CD8-positive, alpha-beta memory T cell (primary cell): ENCODE measurements at regions of chr16 and their contacts with region 1.

Region 1: DNA sequence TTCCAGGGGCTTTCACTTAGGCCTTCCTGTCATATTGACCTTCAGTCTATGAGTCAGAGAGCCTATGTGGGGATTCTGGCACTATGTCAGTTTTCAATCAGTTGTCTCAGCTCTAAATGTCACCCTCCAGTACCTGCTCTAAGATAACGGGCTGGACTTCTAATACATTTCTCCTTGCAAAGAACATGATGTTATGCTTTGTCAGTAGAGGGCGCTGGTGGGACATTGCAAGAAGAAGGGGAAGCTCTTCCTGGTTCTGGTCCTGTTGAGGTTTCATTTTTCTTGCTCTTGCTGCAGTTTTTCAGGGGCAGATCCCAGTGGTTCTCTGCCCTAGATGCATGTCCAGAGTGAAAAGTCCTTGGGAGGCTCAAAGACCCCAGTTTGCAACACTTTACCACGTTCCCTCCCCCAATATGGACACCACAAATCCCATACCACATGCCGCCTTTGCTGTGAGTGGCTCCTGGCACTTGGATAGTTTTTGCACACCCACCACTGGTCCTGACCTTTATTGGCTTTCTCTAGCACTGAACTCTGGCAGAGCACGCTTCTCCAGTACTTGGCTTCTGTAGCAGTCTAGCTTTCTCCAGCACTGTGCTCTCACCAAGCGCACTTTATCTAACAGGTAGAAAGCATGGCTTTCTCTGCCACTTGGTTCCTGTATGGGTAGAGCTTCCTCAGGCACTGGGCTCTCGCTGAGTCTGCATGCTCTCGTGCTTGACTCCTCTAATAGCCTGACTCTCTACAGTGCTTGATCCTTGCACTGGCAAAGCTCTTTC is 49.0 kb downstream of the BCL7C start:
- DNase-seq: peak; percentile 69 to 86 (median 79)
- H3K4me3 ChIP-seq: peak overlapping the region; percentile 17
- H3K4me3 Mint-ChIP-seq: peak overlapping the region in 6 of 7 donors; percentile 60 to 71 (median 68)
- H3K27ac ChIP-seq: no peak overlapping the region
- H3K27ac Mint-ChIP-seq: peak overlapping the region in 6 of 8 donors; percentile 10 to 86 (median 37)
- H3K4me1 ChIP-seq: peaks cover 7% of the 10 kb centered on the region
- H3K4me1 Mint-ChIP-seq: peaks cover 8 to 10% (median 10%) of the 10 kb centered on the region in 3 donors
- H3K27me3 ChIP-seq: no peaks in the 10 kb centered on the region
- H3K27me3 Mint-ChIP-seq: peaks cover 0 to 2% of the 10 kb centered on the region in 2 donors

Region 2: DNA sequence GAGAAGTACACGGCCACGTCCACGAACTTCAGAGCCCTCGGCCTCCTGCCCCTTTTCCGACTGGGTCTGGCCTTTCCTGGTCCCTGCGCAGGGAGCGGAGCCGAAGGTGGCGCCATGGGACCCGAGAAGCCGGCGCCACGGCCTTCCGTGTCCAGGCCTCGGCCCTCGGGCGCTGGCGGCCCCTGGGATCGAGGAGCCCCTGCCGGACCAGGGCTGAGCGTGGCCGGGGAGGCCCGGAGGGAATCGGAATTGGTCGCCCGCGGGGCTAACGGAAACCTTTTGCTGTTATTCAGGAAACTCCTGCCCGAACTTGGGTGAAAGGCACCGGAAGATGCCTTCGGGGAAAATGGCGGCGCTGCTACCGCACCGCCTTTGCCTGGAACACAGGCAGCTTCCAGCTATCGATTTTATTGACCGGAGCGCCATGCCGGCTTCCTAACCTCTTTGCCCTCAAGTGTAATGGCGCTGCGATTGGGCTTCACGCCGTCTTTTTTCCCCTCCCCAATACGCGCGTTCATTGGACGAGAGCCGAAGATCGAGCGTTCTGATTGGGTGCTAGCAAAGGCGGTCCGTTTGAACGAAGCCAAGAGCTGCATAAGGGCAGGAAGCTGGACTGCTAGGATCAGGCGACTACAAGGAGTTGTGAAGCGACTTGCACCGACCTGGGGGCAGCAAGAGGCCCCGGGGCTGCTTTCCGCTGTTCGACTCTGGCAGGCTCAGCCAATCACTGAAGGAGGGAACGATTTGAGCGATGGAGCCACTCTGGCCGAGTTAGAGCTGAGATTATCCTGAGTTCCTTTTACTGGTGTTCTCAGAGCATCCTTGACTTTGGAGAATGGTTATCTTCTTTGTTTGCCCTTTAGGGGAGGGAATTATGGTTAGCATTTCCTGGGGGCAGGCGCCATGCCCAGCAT is 234.7 kb before region 1 on chr16 and contains the start of gene ZNF689:
- CTCF ChIA-PET with region 1: no interaction called
- POLR2A ChIA-PET with region 1: no interaction called
- DNase-seq: peak; percentile 86 to 96 (median 93)
- H3K4me3 ChIP-seq: peak within 1 kb of the TSS; percentile 97
- H3K4me3 Mint-ChIP-seq: peak within 1 kb of the TSS; percentile 83 to 98 (median 94)
- H3K27ac ChIP-seq: peak within 1 kb of the TSS; percentile 97
- H3K27ac Mint-ChIP-seq: peak within 1 kb of the TSS; percentile 83 to 100 (median 96)
- H3K4me1 ChIP-seq: peaks cover 12% of the 10 kb centered on the region
- H3K4me1 Mint-ChIP-seq: peaks cover 13 to 26% (median 22%) of the 10 kb centered on the region in 3 donors
- H3K27me3 ChIP-seq: no peaks in the 10 kb centered on the region
- H3K27me3 Mint-ChIP-seq: peaks cover 0 to 3% of the 10 kb centered on the region in 2 donors
- total RNA-seq, gene ZNF689: 14.6 to 15.7 TPM

Region 3: GRCh38 chr16:30834130-30834740 is 10.6 kb before region 1 on chr16:
- CTCF ChIA-PET with region 1: interaction called, 11 read pairs
- POLR2A ChIA-PET with region 1: interaction called, 4 read pairs
- DNase-seq: no peak
- H3K4me3 ChIP-seq: no peak overlapping the region
- H3K4me3 Mint-ChIP-seq: no peak overlapping the region
- H3K27ac ChIP-seq: no peak overlapping the region
- H3K27ac Mint-ChIP-seq: no peak overlapping the region
- H3K4me1 ChIP-seq: no peaks in the 10 kb centered on the region
- H3K4me1 Mint-ChIP-seq: no peaks in the 10 kb centered on the region
- H3K27me3 ChIP-seq: no peaks in the 10 kb centered on the region
- H3K27me3 Mint-ChIP-seq: peaks cover 0 to under 1% of the 10 kb centered on the region in 2 donors

Region 4: GRCh38 chr16:30922420-30922959 is 77.6 kb after region 1 on chr16:
- CTCF ChIA-PET with region 1: interaction called, 60 read pairs
- POLR2A ChIA-PET with region 1: no interaction called
- DNase-seq: peak; percentile 99 to 100 (median 100)
- H3K4me3 ChIP-seq: peak overlapping the region; percentile 95
- H3K4me3 Mint-ChIP-seq: peak overlapping the region; percentile 93 to 99 (median 96)
- H3K27ac ChIP-seq: peak overlapping the region; percentile 84
- H3K27ac Mint-ChIP-seq: peak overlapping the region; percentile 95 to 100 (median 98)
- H3K4me1 ChIP-seq: no peaks in the 10 kb centered on the region
- H3K4me1 Mint-ChIP-seq: peaks cover 15 to 33% (median 16%) of the 10 kb centered on the region in 3 donors
- H3K27me3 ChIP-seq: no peaks in the 10 kb centered on the region
- H3K27me3 Mint-ChIP-seq: no peaks in the 10 kb centered on the region

Region 5: GRCh38 chr16:30941600-30942425 is 97.0 kb after region 1 on chr16:
- CTCF ChIA-PET with region 1: interaction called, 43 read pairs
- POLR2A ChIA-PET with region 1: no interaction called
- DNase-seq: peak; percentile 53 to 74 (median 55)
- H3K4me3 ChIP-seq: no peak overlapping the region
- H3K4me3 Mint-ChIP-seq: peak overlapping the region in 4 of 7 donors; percentile 34 to 84 (median 51)
- H3K27ac ChIP-seq: no peak overlapping the region
- H3K27ac Mint-ChIP-seq: peak overlapping the region in 4 of 8 donors; percentile 50 to 84 (median 59)
- H3K4me1 ChIP-seq: peaks cover 7% of the 10 kb centered on the region
- H3K4me1 Mint-ChIP-seq: peaks cover 10 to 24% (median 14%) of the 10 kb centered on the region in 3 donors
- H3K27me3 ChIP-seq: no peaks in the 10 kb centered on the region
- H3K27me3 Mint-ChIP-seq: no peaks in the 10 kb centered on the region

Region 6: GRCh38 chr16:31094424-31095120 is 249.7 kb after region 1 on chr16 and contains the start of gene VKORC1:
- CTCF ChIA-PET with region 1: no interaction called
- POLR2A ChIA-PET with region 1: no interaction called
- DNase-seq: peak; percentile 74 to 89 (median 82)
- H3K4me3 ChIP-seq: peak within 1 kb of the TSS; percentile 98
- H3K4me3 Mint-ChIP-seq: peak within 1 kb of the TSS; percentile 73 to 97 (median 90)
- H3K27ac ChIP-seq: peak within 1 kb of the TSS; percentile 75
- H3K27ac Mint-ChIP-seq: peak within 1 kb of the TSS; percentile 68 to 97 (median 90)
- H3K4me1 ChIP-seq: peaks cover 16% of the 10 kb centered on the region
- H3K4me1 Mint-ChIP-seq: peaks cover 24 to 38% (median 30%) of the 10 kb centered on the region in 3 donors
- H3K27me3 ChIP-seq: no peaks in the 10 kb centered on the region
- H3K27me3 Mint-ChIP-seq: no peaks in the 10 kb centered on the region
- total RNA-seq, gene VKORC1: 66.0 to 74.3 TPM